Activated B cell treated with CpG ODN at 0.5 μM for 24 hours (primary cell): ENCODE measurements at regions of chr12 and their contacts with region 1.

Region 1: GRCh38 chr12:24469089-24469488 is 479.8 kb downstream of the BCAT1 start:
- DNase-seq: no peak
- ATAC-seq: no peak
- H3K4me3 Mint-ChIP-seq: no peak overlapping the region
- H3K27ac Mint-ChIP-seq: no peak overlapping the region
- H3K4me1 Mint-ChIP-seq: peaks cover 5% of the 10 kb centered on the region
- H3K27me3 Mint-ChIP-seq: no peaks in the 10 kb centered on the region
- CTCF ChIP-seq: no peak

Region 2: DNA sequence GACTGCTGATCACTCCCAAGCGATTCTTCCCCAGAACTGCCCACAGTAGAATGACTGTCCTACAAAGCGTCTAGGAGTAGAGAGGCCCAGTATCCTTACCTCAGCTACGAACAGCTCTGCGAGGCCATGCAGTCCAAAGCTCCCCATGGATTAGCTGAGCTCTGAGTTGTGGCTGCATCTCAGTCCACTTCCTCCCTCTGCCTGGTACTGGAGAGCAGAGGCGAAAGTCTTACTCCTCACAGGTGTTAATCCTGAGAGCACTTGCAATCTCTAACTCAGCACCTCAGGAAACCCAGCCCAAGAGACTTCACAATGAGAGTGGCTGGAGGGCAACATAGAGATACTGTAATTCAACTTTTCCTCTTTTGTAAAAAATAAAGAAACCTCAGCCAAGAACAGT is 13.3 kb before region 1 on chr12:
- CTCF ChIA-PET with region 1: no interaction called
- POLR2A ChIA-PET with region 1: no interaction called
- intact Hi-C with region 1: loop called (anchors 2 kb)
- DNase-seq: no peak
- ATAC-seq: no peak
- H3K4me3 Mint-ChIP-seq: no peak overlapping the region
- H3K27ac Mint-ChIP-seq: no peak overlapping the region
- H3K4me1 Mint-ChIP-seq: no peaks in the 10 kb centered on the region
- H3K27me3 Mint-ChIP-seq: no peaks in the 10 kb centered on the region
- CTCF ChIP-seq: no peak

Region 3: GRCh38 chr12:25518512-25518911 is 1049.4 kb after region 1 on chr12:
- CTCF ChIA-PET with region 1: no interaction called
- POLR2A ChIA-PET with region 1: no interaction called
- intact Hi-C with region 1: no loop called
- DNase-seq: no peak
- ATAC-seq: no peak
- H3K4me3 Mint-ChIP-seq: no peak overlapping the region
- H3K27ac Mint-ChIP-seq: no peak overlapping the region
- H3K4me1 Mint-ChIP-seq: no peaks in the 10 kb centered on the region
- H3K27me3 Mint-ChIP-seq: peaks cover 16% of the 10 kb centered on the region
- CTCF ChIP-seq: no peak